ENCODE measurements at regions of chr1 and their contacts with region 1.

Region 1: DNA sequence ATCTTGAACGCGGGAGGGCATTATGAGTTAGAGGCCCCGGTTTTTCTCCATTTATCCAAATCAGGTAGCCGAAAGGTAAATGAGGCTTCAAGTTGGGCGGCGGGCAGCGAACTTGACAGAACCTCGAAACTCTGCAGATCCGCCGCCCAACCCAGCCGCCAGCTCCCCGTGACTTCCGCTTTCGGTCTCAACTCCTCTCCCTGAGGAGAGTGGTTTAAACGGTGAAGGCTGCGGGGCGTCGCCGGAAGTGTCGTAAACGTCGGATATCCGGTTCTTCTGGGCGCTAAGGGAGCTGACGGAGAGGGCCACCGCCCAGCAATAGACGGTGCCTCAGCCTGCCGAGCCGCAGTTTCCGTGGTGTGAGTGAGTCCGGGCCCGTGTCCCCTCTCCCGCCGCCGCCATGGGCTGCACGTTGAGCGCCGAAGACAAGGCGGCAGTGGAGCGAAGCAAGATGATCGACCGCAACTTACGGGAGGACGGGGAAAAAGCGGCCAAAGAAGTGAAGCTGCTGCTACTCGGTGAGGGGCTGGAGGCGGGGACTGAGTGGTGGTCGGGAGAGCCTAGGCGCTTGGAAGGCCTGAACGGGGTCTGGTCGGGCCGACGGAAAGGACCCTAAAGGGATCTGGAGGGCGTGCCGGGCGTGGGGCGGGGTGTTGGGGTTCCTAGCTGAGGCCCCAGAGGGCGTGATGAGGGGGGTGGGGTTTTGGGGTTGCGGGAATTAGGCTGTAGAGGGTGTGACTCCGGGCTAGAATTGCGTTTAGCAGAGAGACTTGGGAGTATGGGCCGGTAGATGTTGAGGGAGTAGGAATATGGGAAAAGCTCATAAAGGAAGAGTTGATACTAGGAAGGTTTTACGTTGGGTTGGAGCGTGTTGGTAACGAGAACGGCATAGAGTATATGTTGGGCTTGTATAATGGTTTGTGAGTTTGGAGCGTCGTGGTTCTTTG is at the start of gene GNAI3:
- DNase-seq: peak; percentile 96 to 98 (median 98)
- ATAC-seq: peak; percentile 93 to 97 (median 94)
- H3K4me3 ChIP-seq: peak within 1 kb of the TSS; percentile 85 to 89 (median 88)
- H3K27ac ChIP-seq: peak within 1 kb of the TSS; percentile 92 to 97 (median 95)
- H3K4me1 ChIP-seq: peaks cover 0 to 28% (median 3%) of the 10 kb centered on the region in 4 donors
- H3K27me3 ChIP-seq: no peaks in the 10 kb centered on the region
- CTCF ChIP-seq: no peak
- POLR2A ChIP-seq: peak; percentile 99
- total RNA-seq, gene GNAI3: 2.5 to 4.3 (median 3.3) TPM

Region 2: DNA sequence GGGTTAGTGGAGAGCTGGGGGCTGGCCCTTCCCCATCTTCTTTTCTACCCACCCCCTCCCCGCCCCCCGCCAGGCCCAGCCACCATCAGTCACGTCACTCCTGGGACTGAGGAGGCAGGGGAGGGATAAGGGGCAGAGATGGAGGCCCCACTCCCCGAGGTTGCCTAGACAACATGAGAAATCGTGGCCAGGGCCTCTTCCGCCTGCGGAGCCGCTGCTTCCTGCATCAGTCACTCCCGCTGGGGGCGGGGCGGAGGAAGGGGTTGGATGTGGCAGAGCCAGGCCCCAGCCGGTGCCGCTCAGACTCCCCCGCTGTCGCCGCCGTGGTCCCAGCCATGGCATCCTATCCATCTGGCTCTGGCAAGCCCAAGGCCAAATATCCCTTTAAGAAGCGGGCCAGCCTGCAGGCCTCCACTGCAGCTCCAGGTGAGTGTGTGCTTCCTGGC is 72.3 kb after region 1 on chr1:
- intact Hi-C with region 1: loop called (anchors 5 to 10 kb)
- DNase-seq: peak; percentile 94 to 97 (median 95)
- ATAC-seq: peak; percentile 69 to 77 (median 74)
- H3K4me3 ChIP-seq: peak overlapping the region; percentile 64 to 94 (median 68)
- H3K27ac ChIP-seq: peak overlapping the region; percentile 69 to 76 (median 76)
- H3K4me1 ChIP-seq: peaks cover 0 to 43% (median 13%) of the 10 kb centered on the region in 4 donors
- H3K27me3 ChIP-seq: no peaks in the 10 kb centered on the region
- CTCF ChIP-seq: no peak
- POLR2A ChIP-seq: no peak

Region 3: DNA sequence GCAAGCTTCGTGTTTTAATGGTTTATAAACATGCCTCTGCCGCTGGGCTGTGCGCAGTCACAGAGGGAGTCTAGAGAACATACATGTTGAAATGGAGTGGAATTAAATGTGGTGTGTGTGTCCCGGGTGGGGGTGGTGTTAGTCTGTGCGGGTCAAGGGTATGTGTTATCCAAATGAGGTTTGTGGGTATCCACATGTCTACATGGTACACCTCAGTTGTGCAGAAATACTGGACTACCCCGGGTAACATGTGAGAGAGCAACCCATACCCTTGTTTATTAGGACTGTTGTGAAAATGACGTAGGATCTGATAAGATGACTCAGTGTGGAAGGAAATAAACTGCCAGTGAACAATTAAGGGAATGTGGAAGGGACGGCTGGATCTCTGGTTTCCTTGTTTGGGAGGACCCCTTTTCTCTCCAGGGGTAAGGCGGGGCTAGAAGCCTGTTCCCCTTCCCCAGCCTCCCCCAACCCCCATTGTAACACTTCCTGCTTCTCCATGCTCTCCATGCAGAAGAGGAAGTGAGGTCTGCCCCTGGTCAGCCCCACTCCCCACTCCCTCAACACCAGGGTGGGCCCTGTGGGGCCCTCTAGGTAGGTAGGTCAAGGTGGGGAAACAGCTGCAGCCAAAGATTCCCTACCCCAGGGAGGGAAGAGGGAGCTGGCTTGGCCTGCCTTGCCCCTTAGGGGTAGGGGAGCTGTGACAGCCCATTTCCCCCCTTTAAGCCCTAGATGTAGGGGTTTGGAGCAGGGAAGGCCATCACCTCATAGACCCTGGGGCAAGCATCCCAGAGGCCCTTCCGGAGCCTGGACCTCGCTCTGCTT is 214.4 kb after region 1 on chr1:
- intact Hi-C with region 1: loop called in 1 of 2 experiments (anchors 10 kb)
- DNase-seq: peak in 2 of 3 donors; percentile 38 to 39
- ATAC-seq: peak; percentile 27 to 43 (median 34)
- H3K4me3 ChIP-seq: no peak overlapping the region
- H3K27ac ChIP-seq: no peak overlapping the region
- H3K4me1 ChIP-seq: no peaks in the 10 kb centered on the region
- H3K27me3 ChIP-seq: no peaks in the 10 kb centered on the region
- CTCF ChIP-seq: no peak
- POLR2A ChIP-seq: no peak

Measured in right lobe of liver (tissue), 6 donors.